ENCODE measurements at regions of chrX and their contacts with region 1.

Region 1: GRCh38 chrX:16719334-16720084 is at the start of gene SYAP1:
- DNase-seq: peak; percentile 98
- H3K4me3 Mint-ChIP-seq: peak within 1 kb of the TSS; percentile 94
- H3K27ac Mint-ChIP-seq: peak within 1 kb of the TSS; percentile 99
- H3K4me1 Mint-ChIP-seq: peaks cover 5% of the 10 kb centered on the region
- H3K27me3 Mint-ChIP-seq: peaks cover 8% of the 10 kb centered on the region
- CTCF ChIP-seq: no peak
- total RNA-seq, gene SYAP1: 37.0 and 40.0 TPM in 2 replicates

Region 2: GRCh38 chrX:15854712-15855567 is 864.6 kb before region 1 on chrX and contains the start of gene AP1S2:
- CTCF ChIA-PET with region 1: no interaction called
- POLR2A ChIA-PET with region 1: interaction called, 12 read pairs
- intact Hi-C with region 1: no loop called
- DNase-seq: peak; percentile 96
- H3K4me3 Mint-ChIP-seq: peak within 1 kb of the TSS; percentile 93
- H3K27ac Mint-ChIP-seq: peak within 1 kb of the TSS; percentile 61
- H3K4me1 Mint-ChIP-seq: peaks cover 6% of the 10 kb centered on the region
- H3K27me3 Mint-ChIP-seq: peaks cover 27% of the 10 kb centered on the region
- CTCF ChIP-seq: no peak
- total RNA-seq, gene AP1S2: 8.4 and 9.4 TPM in 2 replicates

Region 3: DNA sequence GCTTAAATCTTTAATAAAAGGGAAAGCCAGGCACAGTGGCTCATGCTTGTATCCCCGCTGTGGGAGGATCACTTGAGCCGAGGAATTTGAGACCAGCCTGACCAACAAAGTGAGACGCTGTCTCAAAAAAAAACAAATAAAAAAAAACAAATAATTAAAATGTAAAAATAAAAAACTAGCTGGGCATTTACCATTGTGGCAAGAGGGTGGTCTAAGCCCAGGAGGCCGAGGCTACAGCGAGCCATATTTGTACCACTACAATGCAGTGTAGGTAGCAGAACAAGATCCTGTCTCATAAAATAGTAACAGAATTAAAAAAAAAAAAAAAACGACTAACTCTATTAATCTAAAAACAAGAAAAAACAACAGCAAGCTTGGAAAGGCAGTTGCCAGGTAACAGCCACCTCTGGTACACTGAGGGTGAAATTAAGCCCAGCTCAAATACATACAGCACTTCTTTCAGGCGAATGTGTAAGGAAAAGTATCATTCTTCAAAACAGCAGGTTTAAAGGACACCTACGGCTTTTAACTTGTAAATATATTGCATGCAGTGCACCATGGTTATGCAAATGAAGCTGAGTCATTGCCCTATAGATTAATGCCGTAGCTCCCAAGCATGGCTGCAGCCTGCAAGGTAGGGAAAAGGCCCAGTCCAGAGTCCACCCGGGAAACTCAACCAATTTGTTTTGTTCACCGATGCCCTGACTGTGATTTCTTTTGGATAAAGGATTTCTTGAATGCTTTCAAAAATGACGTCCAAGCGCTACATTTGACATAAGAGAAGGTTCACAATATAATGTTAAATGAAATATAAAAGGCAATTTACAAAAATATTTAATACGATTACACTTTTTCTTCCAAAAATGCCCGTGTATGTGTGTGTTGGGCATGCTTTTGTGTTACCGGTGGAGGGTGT is 52.2 kb after region 1 on chrX:
- CTCF ChIA-PET with region 1: interaction called, 3 read pairs
- POLR2A ChIA-PET with region 1: interaction called, 13 read pairs
- intact Hi-C with region 1: no loop called
- DNase-seq: peak; percentile 82
- H3K4me3 Mint-ChIP-seq: no peak overlapping the region
- H3K27ac Mint-ChIP-seq: peak overlapping the region; percentile 95
- H3K4me1 Mint-ChIP-seq: no peaks in the 10 kb centered on the region
- H3K27me3 Mint-ChIP-seq: no peaks in the 10 kb centered on the region
- CTCF ChIP-seq: no peak

Region 4: GRCh38 chrX:16786139-16786790 is 66.8 kb after region 1 on chrX and contains the start of gene TXLNG:
- CTCF ChIA-PET with region 1: interaction called, 7 read pairs
- POLR2A ChIA-PET with region 1: interaction called, 30 read pairs
- intact Hi-C with region 1: loop called (anchors 1 kb)
- DNase-seq: peak; percentile 100
- H3K4me3 Mint-ChIP-seq: peak within 1 kb of the TSS; percentile 89
- H3K27ac Mint-ChIP-seq: peak within 1 kb of the TSS; percentile 75
- H3K4me1 Mint-ChIP-seq: no peaks in the 10 kb centered on the region
- H3K27me3 Mint-ChIP-seq: no peaks in the 10 kb centered on the region
- CTCF ChIP-seq: no peak
- total RNA-seq, gene TXLNG: 32.4 and 43.2 TPM in 2 replicates

Region 5: DNA sequence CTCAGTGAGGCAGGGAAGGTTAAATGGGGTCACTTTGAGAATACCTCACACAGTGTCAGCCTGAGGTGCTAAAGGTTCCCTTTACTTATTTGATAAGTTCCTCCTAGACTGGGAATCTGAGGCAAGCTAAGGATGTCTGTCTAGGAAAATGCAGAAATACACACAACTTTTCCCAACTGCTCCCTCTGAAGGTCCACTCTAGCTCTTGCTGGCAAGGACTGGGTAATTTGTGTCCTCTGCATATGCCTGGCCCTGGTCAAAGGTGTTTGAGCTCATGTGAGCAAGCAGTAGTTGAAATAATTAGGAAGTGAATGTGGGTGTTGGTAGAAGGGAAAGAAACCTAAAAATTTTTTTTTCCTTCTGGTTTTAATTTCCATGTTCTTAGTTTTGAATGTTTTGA is 88.0 kb after region 1 on chrX:
- CTCF ChIA-PET with region 1: no interaction called
- POLR2A ChIA-PET with region 1: interaction called, 16 read pairs
- intact Hi-C with region 1: no loop called
- DNase-seq: peak; percentile 40
- H3K4me3 Mint-ChIP-seq: peak overlapping the region; percentile 69
- H3K27ac Mint-ChIP-seq: peak overlapping the region; percentile 49
- H3K4me1 Mint-ChIP-seq: peaks cover 12% of the 10 kb centered on the region
- H3K27me3 Mint-ChIP-seq: no peaks in the 10 kb centered on the region
- CTCF ChIP-seq: peak; percentile 23

Measured in MCF 10A (cell line).